ENCODE measurements at regions of chr17 and their contacts with region 1.

Region 1: DNA sequence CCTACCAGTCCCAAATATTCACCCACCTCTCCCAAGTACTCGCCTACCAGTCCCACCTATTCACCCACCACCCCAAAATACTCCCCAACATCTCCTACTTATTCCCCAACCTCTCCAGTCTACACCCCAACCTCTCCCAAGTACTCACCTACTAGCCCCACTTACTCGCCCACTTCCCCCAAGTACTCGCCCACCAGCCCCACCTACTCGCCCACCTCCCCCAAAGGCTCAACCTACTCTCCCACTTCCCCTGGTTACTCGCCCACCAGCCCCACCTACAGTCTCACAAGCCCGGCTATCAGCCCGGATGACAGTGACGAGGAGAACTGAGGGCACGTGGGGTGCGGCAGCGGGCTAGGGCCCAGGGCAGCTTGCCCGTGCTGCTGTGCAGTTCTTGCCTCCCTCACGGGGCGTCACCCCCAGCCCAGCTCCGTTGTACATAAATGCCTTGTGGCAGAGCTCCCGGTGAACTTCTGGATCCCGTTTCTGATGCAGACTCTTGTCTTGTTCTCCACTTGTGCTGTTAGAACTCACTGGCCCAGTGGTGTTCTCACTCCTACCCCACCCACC is 29.8 kb downstream of the POLR2A start:
- DNase-seq: no peak
- H3K4me3 ChIP-seq: no peak overlapping the region
- H3K27ac ChIP-seq: no peak overlapping the region
- H3K4me1 ChIP-seq: peaks cover 0 to 21% (median 4%) of the 10 kb centered on the region in 4 donors
- H3K27me3 ChIP-seq: no peaks in the 10 kb centered on the region
- CTCF ChIP-seq: no peak
- EP300 ChIP-seq: no peak
- POLR2A ChIP-seq: no peak

Region 2: DNA sequence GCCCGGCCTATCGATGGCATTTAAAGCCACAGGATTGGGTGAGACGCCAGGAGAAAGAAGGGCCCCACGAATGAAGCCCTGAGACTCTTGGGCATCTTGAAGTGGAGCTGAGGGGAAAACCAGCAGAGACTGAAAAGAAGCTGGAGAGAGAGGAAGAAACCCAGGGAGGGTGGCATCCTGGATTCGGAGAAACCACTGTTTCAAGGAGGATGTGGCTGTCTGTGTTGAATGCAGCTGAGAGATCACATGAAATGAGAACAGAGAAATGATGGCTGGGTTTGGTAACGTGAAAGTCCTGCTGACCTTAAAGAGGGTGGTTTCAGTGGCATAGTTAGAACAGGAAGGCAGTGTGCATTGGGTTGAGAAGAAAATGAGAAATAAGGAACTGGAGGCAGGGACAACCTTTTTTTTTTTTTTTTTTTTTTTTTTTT is 38.7 kb after region 1 on chr17:
- intact Hi-C with region 1: loop called (anchors 5 kb)
- DNase-seq: peak in 1 of 2 donors; percentile 48
- H3K4me3 ChIP-seq: no peak overlapping the region
- H3K27ac ChIP-seq: peak overlapping the region in 3 of 5 donors; percentile 34 to 69 (median 53)
- H3K4me1 ChIP-seq: peaks cover 22 to 67% (median 37%) of the 10 kb centered on the region in 4 donors
- H3K27me3 ChIP-seq: no peaks in the 10 kb centered on the region
- CTCF ChIP-seq: no peak
- EP300 ChIP-seq: no peak
- POLR2A ChIP-seq: no peak